ENCODE measurements at regions of chr22 and their contacts with region 1.

Region 1: GRCh38 chr22:35840302-35840739 is 122.6 kb downstream of the APOL5 start:
- DNase-seq: peak; percentile 58 to 93
- H3K4me3 ChIP-seq: peak overlapping the region; percentile 58 to 60
- H3K27ac ChIP-seq: peak overlapping the region; percentile 72 to 79
- H3K4me1 ChIP-seq: peaks cover 4 to 30% of the 10 kb centered on the region in 2 donors
- H3K27me3 ChIP-seq: no peaks in the 10 kb centered on the region
- CTCF ChIP-seq: no peak

Region 2: GRCh38 chr22:35761037-35761436 is 79.3 kb before region 1 on chr22:
- intact Hi-C with region 1: loop called (anchors 5 kb)
- DNase-seq: no peak
- H3K4me3 ChIP-seq: no peak overlapping the region
- H3K27ac ChIP-seq: no peak overlapping the region
- H3K4me1 ChIP-seq: no peaks in the 10 kb centered on the region
- H3K27me3 ChIP-seq: no peaks in the 10 kb centered on the region
- CTCF ChIP-seq: peak in 2 of 3 experiments; percentile 18 to 37

Region 3: GRCh38 chr22:35783943-35784614 is 56.2 kb before region 1 on chr22:
- intact Hi-C with region 1: loop called (anchors 5 kb)
- DNase-seq: no peak
- H3K4me3 ChIP-seq: no peak overlapping the region
- H3K27ac ChIP-seq: peak overlapping the region in 1 of 2 donors; percentile 26
- H3K4me1 ChIP-seq: peaks cover 6 to 43% of the 10 kb centered on the region in 2 donors
- H3K27me3 ChIP-seq: no peaks in the 10 kb centered on the region
- CTCF ChIP-seq: no peak

Region 4: DNA sequence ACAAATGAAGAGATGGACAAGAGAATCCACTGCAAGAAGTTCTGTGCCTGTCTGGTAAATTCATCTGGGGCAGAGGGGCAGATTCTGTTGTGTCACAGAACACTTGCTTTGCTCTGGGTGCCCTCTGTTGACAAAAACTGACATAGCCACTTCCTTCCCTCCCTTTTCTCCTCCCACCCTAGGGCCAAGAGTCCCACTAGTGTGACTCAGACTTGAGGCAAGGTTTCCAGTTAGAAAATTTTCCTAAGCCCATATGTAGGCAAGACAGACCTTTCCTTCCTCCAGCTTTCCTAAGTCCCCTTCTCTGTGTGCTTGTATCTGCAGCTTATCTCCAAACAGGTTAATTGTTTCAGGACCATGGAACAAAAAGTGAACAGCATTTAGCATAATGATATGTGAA is 81.5 kb after region 1 on chr22:
- intact Hi-C with region 1: loop called (anchors 2 kb)
- DNase-seq: peak; percentile 30 to 88
- H3K4me3 ChIP-seq: no peak overlapping the region
- H3K27ac ChIP-seq: peak overlapping the region; percentile 79 to 85
- H3K4me1 ChIP-seq: peaks cover 10 to 32% of the 10 kb centered on the region in 2 donors
- H3K27me3 ChIP-seq: no peaks in the 10 kb centered on the region
- CTCF ChIP-seq: peak; percentile 60 to 81 (median 66)

Region 5: DNA sequence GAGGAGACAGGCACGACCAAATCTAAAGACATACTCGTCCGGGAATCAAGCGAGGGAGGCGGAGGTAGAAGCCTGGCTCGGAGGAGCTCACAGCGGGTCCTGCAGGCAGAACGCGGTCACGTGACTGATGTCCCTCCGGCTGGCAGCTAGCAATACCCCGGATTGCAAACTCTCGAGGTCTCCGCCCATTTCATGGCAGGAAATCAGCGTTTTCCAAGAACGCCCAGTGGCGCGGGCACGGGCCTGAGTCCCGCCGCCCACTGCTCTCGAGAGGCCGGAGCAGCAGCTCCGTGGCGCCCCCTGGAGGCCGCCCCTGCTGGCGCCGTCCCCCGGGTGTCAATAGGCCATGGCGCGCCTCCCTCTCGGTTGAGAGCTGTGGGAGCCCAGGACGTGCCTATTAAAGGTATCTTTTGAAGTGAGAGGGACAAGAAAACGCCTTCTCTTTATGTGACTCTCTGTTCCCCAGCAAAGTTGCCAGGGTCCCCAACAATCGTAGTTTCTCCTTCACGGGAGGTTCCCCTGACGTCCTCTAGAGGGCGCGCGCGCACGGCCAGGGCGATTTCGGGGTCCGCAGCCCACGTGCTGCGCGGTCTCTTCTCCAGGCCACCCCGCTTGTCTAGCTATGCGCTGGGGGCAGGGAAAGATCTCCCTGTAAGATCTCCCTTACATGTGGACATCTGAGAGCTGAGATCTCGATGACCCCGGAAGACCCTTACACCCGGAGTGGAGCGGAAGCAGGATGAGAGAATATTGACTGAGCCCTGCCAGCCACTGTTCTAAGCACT is 225.6 kb after region 1 on chr22:
- intact Hi-C with region 1: loop called (anchors 5 kb)
- DNase-seq: peak; percentile 77 to 97
- H3K4me3 ChIP-seq: peak overlapping the region; percentile 61 to 64
- H3K27ac ChIP-seq: peak overlapping the region; percentile 83 to 87
- H3K4me1 ChIP-seq: peaks cover 0 to 3% of the 10 kb centered on the region in 2 donors
- H3K27me3 ChIP-seq: no peaks in the 10 kb centered on the region
- CTCF ChIP-seq: peak; percentile 99 to 100 (median 99)

Region 6: DNA sequence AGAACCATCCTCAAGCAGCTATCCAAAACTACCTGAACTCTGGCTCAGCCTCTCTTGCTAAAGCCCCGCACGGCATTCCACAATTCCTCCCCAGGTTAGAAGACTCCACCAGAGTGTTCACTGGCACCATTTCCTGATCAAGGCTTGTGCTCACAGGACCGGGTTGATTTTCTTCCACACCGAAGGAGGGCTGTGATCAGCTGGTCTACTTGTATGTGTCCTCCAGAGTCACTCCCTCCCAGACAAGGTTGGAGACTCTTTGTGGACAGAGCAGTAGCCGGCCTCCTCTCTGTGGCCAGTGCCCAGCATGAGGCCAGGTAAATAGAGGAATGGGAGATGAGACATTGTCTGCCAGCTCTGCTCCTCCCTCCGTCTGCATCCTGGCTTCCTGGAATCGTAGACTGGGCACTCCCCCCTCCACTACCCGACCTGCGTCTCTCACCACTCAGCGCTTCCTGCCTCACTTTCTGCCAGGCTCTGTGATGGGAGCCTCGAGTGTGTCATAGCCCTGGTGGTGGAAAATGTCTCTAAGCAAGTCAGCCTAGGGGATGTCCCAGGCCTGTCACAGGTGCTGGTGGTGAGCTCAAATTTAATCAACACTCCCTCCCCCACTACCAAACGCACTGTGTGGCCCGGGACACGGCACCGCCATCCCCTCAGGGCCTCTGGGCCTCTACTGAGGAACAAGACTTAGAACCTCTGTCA is 1281.7 kb after region 1 on chr22:
- intact Hi-C with region 1: no loop called
- DNase-seq: peak; percentile 40 to 75
- H3K4me3 ChIP-seq: no peak overlapping the region
- H3K27ac ChIP-seq: no peak overlapping the region
- H3K4me1 ChIP-seq: no peaks in the 10 kb centered on the region
- H3K27me3 ChIP-seq: no peaks in the 10 kb centered on the region
- CTCF ChIP-seq: no peak

Measured in ascending aorta (tissue), 2 donors.